ENCODE measurements at regions of chr16 and their contacts with region 1.

Region 1: GRCh38 chr16:89490387-89491237 is at the start of gene ANKRD11:
- DNase-seq: peak; percentile 99
- H3K4me3 Mint-ChIP-seq: peak within 1 kb of the TSS; percentile 96
- H3K27ac Mint-ChIP-seq: peak within 1 kb of the TSS; percentile 98
- H3K4me1 Mint-ChIP-seq: peaks cover 50% of the 10 kb centered on the region
- H3K27me3 Mint-ChIP-seq: no peaks in the 10 kb centered on the region
- total RNA-seq, gene ANKRD11: 174 to 177 TPM

Region 2: DNA sequence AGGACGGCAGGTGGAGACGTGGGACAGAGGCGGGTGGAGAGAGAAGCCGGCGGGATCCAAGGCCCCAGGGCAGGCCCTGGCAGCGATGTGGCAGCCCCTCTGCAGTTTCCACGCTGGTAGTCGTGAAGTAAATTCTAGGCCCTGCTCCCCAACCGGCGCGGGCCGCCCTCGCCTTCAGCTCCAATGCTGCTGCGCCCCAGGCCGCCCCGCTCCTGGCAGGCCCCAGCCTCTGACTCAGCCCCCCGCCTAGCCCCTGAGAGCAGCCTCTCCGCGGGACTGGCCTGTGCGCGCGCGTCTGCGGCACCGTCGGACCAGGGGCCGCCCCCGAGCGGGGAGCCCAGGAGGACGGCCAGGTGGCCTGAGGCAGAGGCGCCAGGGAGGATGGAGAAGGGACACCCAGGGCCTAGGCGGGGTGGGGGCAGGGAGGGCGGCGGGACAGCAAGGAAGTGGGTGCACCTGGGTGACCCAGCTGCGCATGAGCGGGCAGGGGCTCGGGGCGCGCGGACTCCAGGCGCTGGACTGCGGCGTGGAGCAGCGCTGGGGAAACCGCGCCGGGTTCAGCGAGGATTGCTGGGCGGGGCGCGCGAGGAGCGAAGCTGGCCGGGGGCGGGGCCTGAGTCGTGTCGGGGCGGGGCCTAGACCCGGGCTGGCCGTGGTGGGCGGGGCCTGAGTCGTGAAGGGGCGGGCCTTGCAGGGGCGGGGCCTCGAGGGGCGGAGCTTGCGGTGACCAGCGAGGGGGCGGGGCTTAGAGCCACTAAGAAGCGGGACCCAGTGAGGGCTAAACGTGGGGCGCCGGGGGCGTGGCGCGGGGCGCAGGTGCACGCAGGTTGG is 243.5 kb before region 1 on chr16:
- CTCF ChIA-PET with region 1: no interaction called
- intact Hi-C with region 1: loop called (anchors 2 kb)
- DNase-seq: peak; percentile 96
- H3K4me3 Mint-ChIP-seq: peak overlapping the region; percentile 77
- H3K27ac Mint-ChIP-seq: no peak overlapping the region
- H3K4me1 Mint-ChIP-seq: peaks cover 7% of the 10 kb centered on the region
- H3K27me3 Mint-ChIP-seq: no peaks in the 10 kb centered on the region

Region 3: GRCh38 chr16:89277641-89278341 is 212.8 kb before region 1 on chr16:
- CTCF ChIA-PET with region 1: no interaction called
- intact Hi-C with region 1: no loop called
- DNase-seq: no peak
- H3K4me3 Mint-ChIP-seq: no peak overlapping the region
- H3K27ac Mint-ChIP-seq: no peak overlapping the region
- H3K4me1 Mint-ChIP-seq: peaks cover 2% of the 10 kb centered on the region
- H3K27me3 Mint-ChIP-seq: no peaks in the 10 kb centered on the region

Region 4: GRCh38 chr16:89443732-89444084 is 46.9 kb before region 1 on chr16:
- CTCF ChIA-PET with region 1: no interaction called
- intact Hi-C with region 1: loop called (anchors 2 kb)
- DNase-seq: no peak
- H3K4me3 Mint-ChIP-seq: no peak overlapping the region
- H3K27ac Mint-ChIP-seq: no peak overlapping the region
- H3K4me1 Mint-ChIP-seq: peaks cover 95% of the 10 kb centered on the region
- H3K27me3 Mint-ChIP-seq: no peaks in the 10 kb centered on the region

Region 5: DNA sequence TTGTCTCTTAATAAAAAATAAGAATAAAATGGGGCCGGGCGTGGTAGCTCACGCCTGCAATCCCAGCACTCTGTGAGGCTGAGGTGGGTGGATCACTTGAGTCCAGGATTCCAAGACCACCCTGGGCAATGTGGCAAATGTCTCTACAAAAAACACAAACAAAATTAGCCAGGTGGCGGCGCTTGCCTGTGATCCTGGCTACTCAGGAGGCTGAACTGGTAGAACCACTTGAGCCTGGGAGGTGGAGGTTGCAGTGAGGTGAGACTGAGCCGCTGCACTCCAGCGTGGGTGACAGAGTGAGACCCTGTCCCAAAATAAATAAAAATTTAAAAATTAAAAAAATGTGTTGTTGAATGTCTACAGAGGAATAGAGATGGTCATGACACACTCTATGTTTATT is 455.1 kb after region 1 on chr16:
- CTCF ChIA-PET with region 1: no interaction called
- intact Hi-C with region 1: no loop called
- DNase-seq: no peak
- H3K4me3 Mint-ChIP-seq: no peak overlapping the region
- H3K27ac Mint-ChIP-seq: no peak overlapping the region
- H3K4me1 Mint-ChIP-seq: peaks cover 8% of the 10 kb centered on the region
- H3K27me3 Mint-ChIP-seq: peaks cover 18% of the 10 kb centered on the region

Measured in activated naive CD4-positive, alpha-beta T cell treated with anti-CD3 and anti-CD28 coated beads for 36 hours (primary cell).